CD4-positive, alpha-beta memory T cell (primary cell): ENCODE measurements at regions of chr1 and their contacts with region 1.

Region 1: DNA sequence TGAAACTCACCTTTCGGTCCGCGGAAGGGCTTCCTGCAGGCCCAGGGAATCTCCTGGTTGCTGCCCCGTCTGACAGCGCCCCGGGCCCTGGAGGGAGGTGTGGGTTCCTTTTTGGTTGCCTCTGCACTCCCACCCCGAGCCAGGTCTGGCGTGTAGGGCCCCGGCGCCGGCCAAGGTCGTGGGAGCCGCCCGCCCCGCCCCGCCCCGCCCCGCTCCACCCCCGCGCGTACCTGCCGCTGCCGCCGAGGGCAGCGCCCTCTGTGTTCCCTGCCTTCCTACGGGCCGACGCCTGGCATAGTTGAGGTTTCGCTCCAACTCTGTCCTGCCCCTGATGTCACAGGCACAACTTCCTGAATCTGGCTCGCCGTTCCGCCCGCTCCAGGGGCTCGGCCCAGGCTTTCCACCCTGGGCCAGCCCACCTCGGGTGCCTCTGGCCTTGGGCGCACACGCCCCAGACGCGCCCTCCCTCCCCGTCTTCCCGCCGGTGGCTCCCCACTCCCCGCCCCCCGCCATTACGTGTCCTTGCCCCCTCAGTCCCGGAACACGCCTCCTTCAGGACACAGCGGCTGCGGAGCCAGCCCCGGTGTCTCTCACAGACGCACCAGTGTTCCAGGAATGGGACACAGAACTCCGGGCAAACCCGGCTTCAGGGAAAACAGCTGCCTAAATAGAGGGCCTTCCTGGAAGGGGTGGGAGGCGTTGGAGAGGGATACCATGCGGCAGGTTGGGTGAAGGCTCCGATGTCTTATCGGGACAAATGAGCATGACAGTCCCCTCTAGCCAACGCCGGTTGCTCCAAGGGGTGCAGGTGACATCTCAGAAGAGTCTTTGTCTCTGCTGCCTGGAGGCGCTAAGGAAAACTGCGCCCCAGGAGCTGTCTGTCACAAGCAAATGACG is at the start of gene KIAA0040:
- DNase-seq: peak; percentile 49 to 66 (median 51)
- H3K4me3 ChIP-seq: peak within 1 kb of the TSS; percentile 85 to 91
- H3K4me3 Mint-ChIP-seq: peak within 1 kb of the TSS; percentile 92 to 99 (median 98)
- H3K27ac ChIP-seq: peak within 1 kb of the TSS; percentile 75
- H3K27ac Mint-ChIP-seq: peak within 1 kb of the TSS; percentile 92 to 98 (median 96)
- H3K4me1 ChIP-seq: peaks cover 51% of the 10 kb centered on the region
- H3K4me1 Mint-ChIP-seq: peaks cover 39 to 76% (median 51%) of the 10 kb centered on the region in 4 donors
- H3K27me3 ChIP-seq: no peaks in the 10 kb centered on the region
- H3K27me3 Mint-ChIP-seq: no peaks in the 10 kb centered on the region
- total RNA-seq, gene KIAA0040: 28.7 to 33.6 TPM

Region 2: GRCh38 chr1:175023043-175023921 is 169.6 kb before region 1 on chr1 and contains the start of gene MRPS14:
- CTCF ChIA-PET with region 1: interaction called, 3 read pairs
- POLR2A ChIA-PET with region 1: interaction called, 11 read pairs
- intact Hi-C with region 1: loop called (anchors 2 kb)
- DNase-seq: peak; percentile 95 to 98 (median 97)
- H3K4me3 ChIP-seq: peak within 1 kb of the TSS; percentile 79 to 97
- H3K4me3 Mint-ChIP-seq: peak within 1 kb of the TSS; percentile 90 to 98 (median 93)
- H3K27ac ChIP-seq: peak within 1 kb of the TSS; percentile 94
- H3K27ac Mint-ChIP-seq: peak within 1 kb of the TSS; percentile 86 to 97 (median 97)
- H3K4me1 ChIP-seq: peaks cover 25% of the 10 kb centered on the region
- H3K4me1 Mint-ChIP-seq: peaks cover 24 to 43% (median 28%) of the 10 kb centered on the region in 4 donors
- H3K27me3 ChIP-seq: no peaks in the 10 kb centered on the region
- H3K27me3 Mint-ChIP-seq: no peaks in the 10 kb centered on the region
- total RNA-seq, gene MRPS14: 39.3 to 40.6 TPM

Region 3: GRCh38 chr1:175146529-175147213 is 46.2 kb before region 1 on chr1:
- CTCF ChIA-PET with region 1: interaction called, 38 read pairs
- POLR2A ChIA-PET with region 1: no interaction called
- intact Hi-C with region 1: no loop called
- DNase-seq: peak; percentile 47 to 58 (median 54)
- H3K4me3 ChIP-seq: no peak overlapping the region
- H3K4me3 Mint-ChIP-seq: peak overlapping the region in 1 of 8 donors; percentile 22
- H3K27ac ChIP-seq: no peak overlapping the region
- H3K27ac Mint-ChIP-seq: no peak overlapping the region
- H3K4me1 ChIP-seq: peaks cover 2% of the 10 kb centered on the region
- H3K4me1 Mint-ChIP-seq: peaks cover 0 to 13% (median 7%) of the 10 kb centered on the region in 4 donors
- H3K27me3 ChIP-seq: no peaks in the 10 kb centered on the region
- H3K27me3 Mint-ChIP-seq: peaks cover 17% of the 10 kb centered on the region in 2 donors

Region 4: GRCh38 chr1:175169305-175170018 is 23.4 kb before region 1 on chr1:
- CTCF ChIA-PET with region 1: interaction called, 7 read pairs
- POLR2A ChIA-PET with region 1: interaction called, 6 read pairs
- intact Hi-C with region 1: loop called (anchors 2 kb)
- DNase-seq: no peak
- H3K4me3 ChIP-seq: no peak overlapping the region
- H3K4me3 Mint-ChIP-seq: no peak overlapping the region
- H3K27ac ChIP-seq: no peak overlapping the region
- H3K27ac Mint-ChIP-seq: peak overlapping the region; percentile 37 to 85 (median 71)
- H3K4me1 ChIP-seq: peaks cover 30% of the 10 kb centered on the region
- H3K4me1 Mint-ChIP-seq: peaks cover 50 to 76% (median 60%) of the 10 kb centered on the region in 4 donors
- H3K27me3 ChIP-seq: no peaks in the 10 kb centered on the region
- H3K27me3 Mint-ChIP-seq: no peaks in the 10 kb centered on the region